PC-9 (cell line): ENCODE measurements at regions of chr4 and their contacts with region 1.

Region 1: GRCh38 chr4:16642895-16643294 is 255.6 kb downstream of the LDB2 start:
- DNase-seq: no peak
- H3K4me3 ChIP-seq: no peak overlapping the region
- H3K27ac ChIP-seq: no peak overlapping the region
- H3K4me1 ChIP-seq: no peaks in the 10 kb centered on the region
- H3K27me3 ChIP-seq: no peaks in the 10 kb centered on the region; the same call in 1 of the 2 replicates
- CTCF ChIP-seq: no peak; the same call in 1 of the 2 replicates

Region 2: DNA sequence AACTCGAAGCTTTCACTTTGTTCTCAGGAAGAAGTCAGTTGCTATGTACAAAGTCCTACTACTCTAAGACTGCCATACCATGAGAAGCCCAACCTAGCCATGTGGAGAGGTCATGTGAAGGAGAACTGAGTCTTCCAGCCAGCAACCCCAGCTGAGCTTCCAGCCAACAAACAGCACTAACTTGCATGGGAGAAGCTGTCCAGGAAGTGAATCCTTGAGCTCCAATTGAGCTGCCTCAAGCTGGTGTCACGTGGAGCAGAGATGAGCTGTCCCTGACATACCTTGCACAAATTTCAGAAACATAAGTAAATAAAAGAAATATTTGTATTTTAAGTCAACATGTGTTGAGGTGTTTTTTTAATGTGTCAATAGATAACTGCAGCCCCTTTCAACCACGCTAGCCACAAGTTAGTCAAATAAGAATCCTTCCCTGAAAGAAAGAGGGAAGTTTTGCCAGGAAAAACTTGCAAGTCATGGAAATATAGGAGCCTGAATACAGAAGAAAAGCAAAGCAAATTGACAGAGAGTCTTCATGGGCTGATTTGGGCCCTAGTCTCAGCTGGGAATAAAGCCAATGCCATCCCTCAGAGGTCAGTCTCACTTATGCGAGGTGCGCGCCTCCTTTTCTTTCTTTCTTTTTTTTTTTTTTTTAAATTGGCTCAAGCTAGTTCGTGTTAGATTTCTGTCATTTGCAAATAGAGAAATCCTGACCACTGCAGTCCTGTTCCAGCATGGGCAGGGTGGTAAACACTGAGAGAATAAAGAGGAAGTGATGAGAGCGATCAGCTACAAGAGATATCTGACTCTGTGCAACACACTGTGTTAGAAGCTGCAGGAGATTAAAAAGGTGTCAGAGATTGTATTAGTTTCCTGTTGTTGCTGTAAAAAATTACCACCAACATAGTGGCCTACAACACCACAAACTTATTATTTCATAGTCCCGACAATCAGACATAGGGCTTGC is 44.4 kb before region 1 on chr4:
- CTCF ChIA-PET with region 1: no interaction called
- POLR2A ChIA-PET with region 1: no interaction called
- intact Hi-C with region 1: no loop called
- DNase-seq: no peak
- H3K4me3 ChIP-seq: no peak overlapping the region
- H3K27ac ChIP-seq: no peak overlapping the region
- H3K4me1 ChIP-seq: no peaks in the 10 kb centered on the region
- H3K27me3 ChIP-seq: no peaks in the 10 kb centered on the region
- CTCF ChIP-seq: no peak

Region 3: DNA sequence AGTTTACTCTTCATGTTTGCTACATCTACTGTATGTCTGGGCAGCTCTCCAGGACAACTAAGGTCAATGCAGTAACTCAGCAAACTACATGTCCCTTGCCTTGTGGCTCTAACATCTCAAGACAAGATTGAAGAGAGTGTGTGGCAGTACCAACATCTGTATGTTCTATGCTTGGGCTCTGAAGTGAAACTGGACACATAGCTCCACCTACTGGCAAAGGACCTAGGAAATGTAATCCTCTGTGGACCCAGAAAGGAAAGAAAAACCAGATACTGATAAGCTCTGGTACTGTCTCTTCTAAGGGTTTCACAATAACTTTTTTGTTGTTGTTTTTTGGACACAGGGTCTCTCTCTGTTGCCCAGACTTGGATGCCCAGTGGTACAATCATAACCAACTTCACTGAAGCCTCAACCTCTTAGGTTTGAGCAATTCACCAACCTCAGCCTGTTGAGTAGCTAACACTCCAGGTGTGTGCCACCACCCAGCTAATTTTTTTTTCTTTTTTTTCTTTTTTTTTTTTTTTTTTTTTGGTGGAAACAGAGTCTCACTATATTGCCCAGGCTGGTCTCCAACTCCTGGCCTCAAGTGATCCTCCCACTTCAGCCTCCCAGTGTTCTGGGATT is 804.9 kb after region 1 on chr4:
- CTCF ChIA-PET with region 1: no interaction called
- POLR2A ChIA-PET with region 1: no interaction called
- intact Hi-C with region 1: loop called (anchors 5 kb)
- DNase-seq: peak in 1 of 2 experiments; percentile 23
- H3K4me3 ChIP-seq: no peak overlapping the region
- H3K27ac ChIP-seq: no peak overlapping the region
- H3K4me1 ChIP-seq: no peaks in the 10 kb centered on the region
- H3K27me3 ChIP-seq: peaks cover 4% of the 10 kb centered on the region; the same call in 1 of the 2 replicates
- CTCF ChIP-seq: peak; percentile 74